Colonic mucosa (tissue), 4 donors: ENCODE measurements at regions of chr12 and their contacts with region 1.

Region 1: GRCh38 chr12:76037130-76038103 is 5.8 kb upstream of the PHLDA1 start:
- DNase-seq: peak; percentile 36
- H3K4me3 ChIP-seq: no peak overlapping the region
- H3K27ac ChIP-seq: no peak overlapping the region
- H3K4me1 ChIP-seq: no peaks in the 10 kb centered on the region
- H3K27me3 ChIP-seq: no peaks in the 10 kb centered on the region
- CTCF ChIP-seq: peak; percentile 76

Region 2: DNA sequence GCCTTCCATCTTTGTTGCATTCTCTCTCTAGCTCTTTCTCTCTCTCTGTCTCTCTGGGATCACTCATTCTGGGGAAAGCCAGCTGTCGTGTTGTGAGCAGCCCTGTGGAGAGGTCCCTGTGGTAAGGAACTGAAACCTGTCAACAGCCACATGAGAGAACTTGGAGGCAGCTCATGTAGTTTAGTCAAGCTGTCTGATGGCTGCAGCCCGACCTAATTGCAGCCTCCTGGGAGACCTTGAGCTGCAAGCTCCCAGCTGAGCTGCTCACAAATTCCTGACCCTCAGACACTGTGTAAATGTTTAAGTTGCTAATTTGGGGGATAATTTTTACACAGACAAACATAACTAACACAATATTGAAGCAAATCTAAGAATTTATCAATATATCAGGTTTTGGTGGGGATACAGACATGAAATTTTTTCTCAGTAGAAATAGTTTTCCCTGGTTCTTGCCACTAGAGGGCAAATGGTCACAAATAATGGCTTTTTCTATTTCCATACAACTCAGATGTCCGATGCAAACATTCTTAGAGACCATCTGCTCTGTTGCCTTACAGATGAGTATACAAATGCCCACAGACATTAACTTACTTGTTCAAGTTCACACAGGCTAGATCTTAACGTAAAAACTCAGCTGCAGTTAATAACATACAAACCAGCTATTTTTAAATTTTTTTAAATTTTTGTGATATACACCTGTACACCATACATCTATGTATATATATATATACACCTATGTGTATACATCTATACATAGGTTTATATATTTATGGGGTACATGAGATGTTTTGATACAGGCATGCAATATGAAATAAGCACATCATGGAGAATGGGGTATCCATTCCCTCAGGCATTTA is 510.5 kb before region 1 on chr12:
- intact Hi-C with region 1: loop called (anchors 5 kb)
- DNase-seq: no peak
- H3K4me3 ChIP-seq: no peak overlapping the region
- H3K27ac ChIP-seq: no peak overlapping the region
- H3K4me1 ChIP-seq: no peaks in the 10 kb centered on the region
- H3K27me3 ChIP-seq: no peaks in the 10 kb centered on the region
- CTCF ChIP-seq: peak; percentile 70

Region 3: DNA sequence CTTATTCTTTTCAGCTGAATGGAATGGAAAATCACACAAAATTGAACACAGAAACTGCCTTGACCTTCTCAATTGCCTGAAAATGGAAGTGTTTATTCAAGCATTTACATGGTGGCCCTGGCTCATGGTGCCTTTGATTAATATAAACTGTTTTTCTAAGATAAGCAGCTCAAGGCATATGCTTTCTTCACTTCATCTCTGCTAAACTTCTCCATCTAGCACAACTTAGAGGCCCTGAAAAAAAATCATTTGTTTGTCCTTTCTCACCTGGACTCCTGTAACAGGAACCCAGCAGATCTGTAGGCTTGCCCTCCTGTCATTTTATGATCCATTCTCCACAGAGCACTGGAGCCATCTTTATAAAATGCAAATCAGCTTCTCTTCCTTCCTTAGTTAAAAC is 408.5 kb before region 1 on chr12:
- intact Hi-C with region 1: loop called (anchors 5 kb)
- DNase-seq: no peak
- H3K4me3 ChIP-seq: no peak overlapping the region
- H3K27ac ChIP-seq: no peak overlapping the region
- H3K4me1 ChIP-seq: no peaks in the 10 kb centered on the region
- H3K27me3 ChIP-seq: no peaks in the 10 kb centered on the region
- CTCF ChIP-seq: no peak